Colonic mucosa (tissue), 4 donors: ENCODE measurements at regions of chr17 and their contacts with region 1.

Region 1: DNA sequence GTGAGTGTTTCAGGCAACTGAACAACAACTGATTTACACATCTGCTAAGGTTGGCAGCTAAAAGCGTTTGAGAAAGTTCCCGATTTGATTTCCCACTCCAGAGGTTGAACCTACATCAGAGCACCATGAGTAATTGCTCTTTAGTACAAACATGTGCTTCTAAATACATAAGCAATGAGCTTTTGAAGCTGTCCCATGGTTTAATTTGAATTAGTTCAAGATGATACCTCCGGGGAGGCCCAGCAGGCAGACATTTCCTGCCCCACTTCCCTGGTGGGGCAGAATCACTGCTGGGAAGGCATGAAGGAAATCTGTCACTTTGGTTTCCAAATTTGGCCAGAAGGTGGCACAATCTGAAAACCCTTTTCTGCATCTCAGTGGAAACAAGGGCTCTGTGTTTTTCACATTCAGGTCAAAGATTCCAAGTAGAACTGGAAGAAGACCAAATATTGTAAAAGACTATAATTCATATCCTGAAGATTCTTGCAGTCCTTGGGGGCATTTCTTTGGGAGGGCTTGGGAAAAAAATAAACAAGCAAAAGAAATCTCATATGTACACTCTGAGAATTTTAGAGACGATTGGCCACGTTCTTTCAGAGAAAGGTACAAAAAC is 176.2 kb upstream of the FAM20A start:
- DNase-seq: peak; percentile 73
- H3K4me3 ChIP-seq: no peak overlapping the region
- H3K27ac ChIP-seq: no peak overlapping the region
- H3K4me1 ChIP-seq: no peaks in the 10 kb centered on the region
- H3K27me3 ChIP-seq: no peaks in the 10 kb centered on the region
- CTCF ChIP-seq: peak; percentile 54

Region 2: DNA sequence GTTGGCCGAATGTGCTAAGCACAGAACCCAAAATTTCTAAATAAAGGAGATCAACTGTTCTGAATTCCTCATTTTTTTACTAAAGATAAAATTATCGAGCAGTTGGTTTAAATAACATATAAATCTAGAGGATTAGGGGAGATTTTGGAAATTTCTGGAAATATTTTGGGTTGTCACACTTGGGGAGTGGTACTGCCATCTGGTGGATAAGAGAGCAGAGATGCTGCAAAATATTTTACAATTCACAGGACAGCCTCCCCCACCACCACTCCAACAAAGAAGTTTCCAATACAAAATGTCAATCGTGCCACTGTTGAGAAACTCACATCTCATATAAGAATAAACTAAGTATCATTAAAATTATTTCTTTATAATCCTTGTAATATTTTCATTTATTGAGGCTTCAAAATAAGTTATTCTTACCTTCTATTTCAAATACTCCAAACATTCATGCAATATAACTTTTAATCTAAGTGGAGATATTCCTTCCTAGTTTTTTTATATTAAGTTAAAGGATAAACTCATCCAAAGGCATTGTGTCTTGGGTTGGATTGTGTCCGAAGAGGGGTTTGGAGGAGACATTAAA is 194.9 kb after region 1 on chr17:
- intact Hi-C with region 1: loop called (anchors 5 kb)
- DNase-seq: no peak
- H3K4me3 ChIP-seq: no peak overlapping the region
- H3K27ac ChIP-seq: no peak overlapping the region
- H3K4me1 ChIP-seq: no peaks in the 10 kb centered on the region
- H3K27me3 ChIP-seq: no peaks in the 10 kb centered on the region
- CTCF ChIP-seq: peak; percentile 41

Region 3: GRCh38 chr17:69235338-69235930 is 458.1 kb after region 1 on chr17:
- intact Hi-C with region 1: loop called (anchors 2 kb)
- DNase-seq: peak; percentile 85
- H3K4me3 ChIP-seq: no peak overlapping the region
- H3K27ac ChIP-seq: no peak overlapping the region
- H3K4me1 ChIP-seq: no peaks in the 10 kb centered on the region
- H3K27me3 ChIP-seq: no peaks in the 10 kb centered on the region
- CTCF ChIP-seq: peak; percentile 74